Sigmoid colon (tissue), 7 donors: ENCODE measurements at regions of chr17 and their contacts with region 1.

Region 1: DNA sequence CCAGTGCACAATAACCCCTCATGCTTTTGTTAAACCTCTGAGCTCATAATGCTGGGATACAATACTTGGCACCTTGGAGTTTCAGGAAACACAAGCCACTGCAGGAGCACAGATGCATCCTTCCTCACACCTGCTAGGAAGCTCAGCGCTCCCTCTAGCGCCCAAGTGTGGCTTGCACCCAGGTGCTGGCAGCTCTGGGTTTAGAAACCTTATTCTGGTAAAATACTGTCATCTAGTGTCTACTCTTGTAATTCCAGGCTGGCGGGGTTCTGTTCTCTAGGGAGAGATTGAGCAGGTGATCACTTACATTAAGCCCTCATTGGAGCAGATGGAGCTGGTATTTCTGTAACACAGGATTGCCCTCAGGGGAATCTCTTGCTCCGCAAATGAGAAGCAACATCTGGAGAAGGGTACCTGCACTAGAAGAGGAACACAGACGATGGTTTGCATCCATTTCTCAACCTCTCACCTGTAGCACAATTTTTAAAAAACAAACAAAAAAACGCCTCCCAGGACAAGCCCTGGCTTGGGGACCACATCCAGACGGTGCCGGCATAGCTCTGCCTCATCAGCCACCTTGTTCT is 1.5 kb downstream of the CCL1 start:
- DNase-seq: peak; percentile 94
- H3K4me3 ChIP-seq: no peak overlapping the region
- H3K27ac ChIP-seq: no peak overlapping the region
- H3K4me1 ChIP-seq: no peaks in the 10 kb centered on the region
- H3K27me3 ChIP-seq: peaks cover 0 to 7% (median 0%) of the 10 kb centered on the region in 3 donors
- CTCF ChIP-seq: peak; percentile 99 to 100 (median 99)
- EP300 ChIP-seq: no peak
- POLR2A ChIP-seq: no peak

Region 2: DNA sequence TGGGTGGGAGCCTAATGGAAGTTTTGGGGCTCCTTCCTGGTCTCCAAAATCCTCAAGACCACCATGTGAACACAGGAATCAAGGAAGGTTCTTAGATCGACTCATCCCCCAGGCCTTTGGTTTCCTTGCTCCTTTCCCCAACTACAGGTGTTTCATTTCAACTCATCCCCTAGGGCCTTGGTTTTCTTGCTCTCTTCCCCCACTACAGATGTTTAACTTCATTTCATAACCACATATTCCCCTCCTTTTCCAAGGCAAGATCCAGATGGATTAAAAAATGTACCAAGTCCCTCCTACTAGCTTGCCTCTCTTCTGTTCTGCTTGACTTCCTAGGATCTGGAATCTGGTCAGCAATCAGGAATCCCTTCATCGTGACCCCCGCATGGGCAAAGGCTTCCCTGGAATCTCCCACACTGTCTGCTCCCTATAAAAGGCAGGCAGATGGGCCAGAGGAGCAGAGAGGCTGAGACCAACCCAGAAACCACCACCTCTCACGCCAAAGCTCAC is 76.2 kb before region 1 on chr17 and contains the start of gene CCL11:
- intact Hi-C with region 1: loop called (anchors 10 kb)
- DNase-seq: no peak
- H3K4me3 ChIP-seq: peak within 1 kb of the TSS in 3 of 4 donors; percentile 16 to 19 (median 17)
- H3K27ac ChIP-seq: peak within 1 kb of the TSS in 3 of 4 donors; percentile 22 to 53 (median 28)
- H3K4me1 ChIP-seq: no peaks in the 10 kb centered on the region
- H3K27me3 ChIP-seq: no peaks in the 10 kb centered on the region
- CTCF ChIP-seq: no peak
- EP300 ChIP-seq: no peak
- POLR2A ChIP-seq: no peak
- total RNA-seq, gene CCL11: 9.9 to 62.6 (median 46.0) TPM

Region 3: DNA sequence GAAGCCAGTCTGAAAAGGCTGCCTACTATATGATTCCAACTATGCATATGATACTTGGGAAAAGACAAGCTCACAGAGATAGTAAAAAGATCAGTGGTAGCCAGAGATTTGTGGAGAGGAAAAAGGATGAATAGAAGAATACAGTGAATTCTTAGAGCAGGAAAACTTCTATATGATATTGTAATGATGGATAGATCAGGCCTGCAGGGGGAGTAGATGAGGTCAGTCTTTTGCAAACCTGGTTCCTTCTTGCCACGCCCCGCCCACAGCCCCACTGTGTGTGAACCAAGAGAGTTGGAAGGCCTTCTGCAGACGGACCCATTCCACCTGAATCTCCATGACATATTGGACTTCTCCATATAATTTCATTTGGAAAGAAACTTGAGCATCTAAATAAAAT is 43.1 kb before region 1 on chr17:
- intact Hi-C with region 1: no loop called
- DNase-seq: no peak
- H3K4me3 ChIP-seq: no peak overlapping the region
- H3K27ac ChIP-seq: no peak overlapping the region
- H3K4me1 ChIP-seq: peaks cover 0 to 4% (median 2%) of the 10 kb centered on the region in 4 donors
- H3K27me3 ChIP-seq: no peaks in the 10 kb centered on the region
- CTCF ChIP-seq: no peak
- EP300 ChIP-seq: no peak
- POLR2A ChIP-seq: no peak